ENCODE measurements at regions of chr7 and their contacts with region 1.

Region 1: GRCh38 chr7:44565097-44565794 is 8.5 kb downstream of the DDX56 start:
- H3K4me3 ChIP-seq: no peak overlapping the region
- H3K27ac ChIP-seq: no peak overlapping the region
- H3K4me1 ChIP-seq: no peaks in the 10 kb centered on the region; the same call in 1 of the 2 replicates
- CTCF ChIP-seq: peak; percentile 85

Region 2: DNA sequence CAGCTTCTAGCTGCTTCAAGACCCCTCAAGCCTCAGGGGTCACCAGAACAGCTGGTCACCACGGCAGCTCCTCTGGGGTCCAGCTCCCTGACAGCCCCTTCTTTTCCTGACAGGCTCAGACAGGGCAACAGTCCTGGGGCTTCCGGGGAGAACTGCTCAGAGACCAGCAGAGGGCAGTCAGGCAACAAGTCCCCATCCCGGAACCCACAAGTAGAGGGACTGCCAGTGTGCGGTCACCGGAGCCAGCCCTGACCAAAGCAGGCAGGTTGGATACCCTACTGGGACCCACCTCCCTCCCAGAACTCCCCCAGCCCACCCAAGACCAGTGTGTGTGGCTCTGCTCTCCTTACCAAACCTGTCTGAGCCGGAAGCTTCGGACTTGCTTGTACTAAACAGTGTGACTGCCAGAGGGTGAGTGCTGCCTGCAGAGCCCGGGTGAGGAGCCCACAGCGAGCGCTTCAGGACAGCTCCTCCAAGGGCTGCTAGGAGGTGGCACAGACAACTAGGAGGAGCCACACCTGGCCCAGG is 324.2 kb before region 1 on chr7:
- CTCF ChIA-PET with region 1: interaction called, 17 read pairs
- POLR2A ChIA-PET with region 1: no interaction called
- H3K4me3 ChIP-seq: no peak overlapping the region
- H3K27ac ChIP-seq: no peak overlapping the region
- H3K4me1 ChIP-seq: no peaks in the 10 kb centered on the region
- CTCF ChIP-seq: peak; percentile 74

Region 3: DNA sequence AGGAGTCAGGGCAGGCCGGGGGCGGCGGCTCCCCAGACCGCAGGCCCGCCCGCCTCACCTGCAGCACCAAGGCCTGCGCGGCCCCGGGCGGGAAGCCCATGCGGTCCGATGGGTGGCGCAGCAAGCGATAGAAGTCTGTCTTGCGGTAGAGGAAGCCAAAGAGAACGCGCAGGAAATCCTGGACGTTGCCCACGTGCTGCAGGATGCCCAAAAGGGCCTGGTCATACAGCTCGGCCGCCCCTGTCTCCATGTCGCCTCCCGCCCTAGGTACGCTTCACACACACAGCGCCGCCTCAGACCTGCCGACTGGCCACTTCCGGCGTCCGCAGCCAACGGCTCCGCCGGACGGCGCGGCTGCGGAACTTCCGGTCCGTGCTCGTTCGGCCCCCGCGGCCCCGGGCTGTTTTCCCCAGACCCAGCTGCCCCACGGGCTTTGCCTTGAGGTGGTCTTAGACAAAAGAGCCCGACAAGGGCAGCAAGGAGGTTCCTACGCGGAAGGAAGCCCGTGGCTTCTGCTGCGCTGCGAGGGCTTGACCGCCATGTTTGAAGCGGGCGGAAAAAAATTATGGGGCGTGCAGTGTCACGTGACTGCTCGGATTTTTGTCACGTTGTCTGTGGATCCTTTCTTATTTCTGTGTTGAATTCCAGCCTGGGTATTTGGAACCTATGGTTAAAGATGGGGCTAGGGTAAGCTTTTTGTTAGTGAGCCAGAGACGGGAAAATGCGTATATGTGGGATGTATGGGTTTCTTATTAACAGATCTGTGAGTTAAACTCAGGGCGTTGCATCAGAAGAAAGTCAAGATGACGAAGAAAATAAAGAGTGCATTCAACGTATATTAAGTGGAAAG is 74.7 kb before region 1 on chr7 and contains the start of gene NUDCD3:
- CTCF ChIA-PET with region 1: interaction called, 10 read pairs
- POLR2A ChIA-PET with region 1: interaction called, 7 read pairs
- H3K4me3 ChIP-seq: peak within 1 kb of the TSS; percentile 94
- H3K27ac ChIP-seq: peak within 1 kb of the TSS; percentile 88
- H3K4me1 ChIP-seq: peaks cover 3% of the 10 kb centered on the region; the same call in 1 of the 2 replicates
- CTCF ChIP-seq: peak; percentile 93

Region 4: DNA sequence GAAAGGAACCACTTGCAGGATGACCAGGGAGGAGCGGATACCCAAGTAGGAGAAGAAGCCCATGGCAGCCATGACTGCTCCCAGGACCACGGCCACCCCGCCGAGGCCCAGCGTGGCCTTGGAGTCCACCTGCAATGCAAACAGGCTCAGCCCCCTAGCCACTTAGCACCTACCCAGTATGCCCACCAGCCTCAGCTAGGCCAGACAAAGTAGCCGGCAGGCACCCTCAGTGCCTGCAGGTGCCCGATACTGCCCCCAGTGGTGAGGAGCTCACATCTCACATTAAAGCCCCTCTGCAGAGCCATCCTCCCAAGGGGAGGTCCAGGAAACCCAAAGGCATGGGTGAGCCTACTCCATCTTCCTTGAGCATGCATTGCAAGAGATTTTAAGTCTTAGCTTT is 30.7 kb before region 1 on chr7:
- CTCF ChIA-PET with region 1: interaction called, 10 read pairs
- POLR2A ChIA-PET with region 1: interaction called, 4 read pairs
- H3K4me3 ChIP-seq: no peak overlapping the region
- H3K27ac ChIP-seq: no peak overlapping the region
- H3K4me1 ChIP-seq: no peaks in the 10 kb centered on the region
- CTCF ChIP-seq: peak; percentile 57